GM10248 (cell line): ENCODE measurements at regions of chr7 and their contacts with region 1.

Region 1: DNA sequence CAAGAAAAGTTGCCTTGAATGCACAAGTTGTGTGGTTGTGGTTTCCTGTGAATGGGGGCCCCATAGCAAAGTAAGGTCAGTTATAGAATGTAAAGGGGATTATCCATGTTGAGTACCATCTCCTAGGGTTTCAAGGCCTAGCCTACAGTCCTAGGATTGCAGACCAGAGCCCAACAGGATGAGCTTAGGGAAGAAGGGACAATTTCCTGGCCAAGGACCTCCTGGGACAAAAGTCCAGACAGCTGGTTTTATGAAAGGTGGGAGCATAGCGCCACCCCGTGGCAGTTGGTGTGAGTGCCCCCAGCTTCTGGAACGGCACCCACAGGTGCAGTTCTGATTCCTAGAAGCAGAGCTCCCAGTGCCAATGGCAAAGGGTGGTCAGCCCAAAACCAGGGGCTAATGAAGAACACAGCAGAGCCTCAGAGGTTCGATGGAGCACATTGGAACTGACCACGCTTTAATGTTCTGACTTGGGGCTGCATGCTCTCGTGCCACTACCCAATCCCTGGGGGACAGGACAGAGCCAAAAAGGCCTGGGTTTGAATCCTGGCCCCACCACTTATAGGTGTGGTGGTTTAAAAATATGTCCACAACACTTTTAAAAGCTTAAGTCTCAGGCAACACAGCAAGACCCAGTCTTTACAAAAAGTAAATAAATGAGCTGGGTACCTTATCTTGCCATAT is 25.8 kb upstream of the TMEM120A start:
- DNase-seq: peak; percentile 79
- CTCF ChIP-seq: peak; percentile 82

Region 2: GRCh38 chr7:75762314-75762917 is 257.8 kb before region 1 on chr7:
- CTCF ChIA-PET with region 1: interaction called, 18 read pairs
- POLR2A ChIA-PET with region 1: no interaction called
- DNase-seq: peak; percentile 80
- CTCF ChIP-seq: peak; percentile 72

Region 3: DNA sequence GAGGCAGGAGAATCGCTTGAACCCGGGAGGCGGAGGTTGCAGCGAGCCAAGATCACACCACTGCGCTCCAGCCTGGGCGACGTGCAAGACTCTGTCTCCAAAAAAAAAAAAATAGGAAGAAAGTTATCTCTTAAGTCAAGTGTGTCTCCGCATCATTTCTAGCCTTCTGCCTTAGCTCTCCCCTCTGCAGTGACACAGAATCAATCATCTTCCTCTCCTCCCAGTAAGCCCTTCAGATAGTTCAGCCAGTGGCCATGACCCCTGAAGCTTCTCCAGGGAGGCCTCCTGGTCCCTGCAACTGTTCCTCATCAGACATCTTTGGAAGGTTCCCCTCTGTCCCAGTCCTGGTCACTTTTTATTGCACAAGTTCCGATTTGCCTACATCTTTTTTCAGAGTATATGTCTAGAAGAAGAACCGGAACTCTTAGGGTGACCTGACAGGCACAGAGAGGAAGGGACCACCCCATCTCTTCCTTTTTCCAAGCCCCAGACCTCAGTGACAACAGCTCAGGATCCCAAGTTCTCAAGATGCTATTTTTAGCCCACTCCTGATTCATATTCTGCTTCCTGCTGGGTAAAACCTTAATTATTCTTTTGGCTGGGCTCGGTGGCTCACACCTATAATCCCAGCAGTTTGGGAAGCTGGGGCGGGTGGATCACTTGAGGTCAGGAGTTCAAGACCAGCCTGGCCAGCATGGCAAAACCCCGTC is 147.9 kb before region 1 on chr7:
- CTCF ChIA-PET with region 1: interaction called, 193 read pairs
- POLR2A ChIA-PET with region 1: no interaction called
- DNase-seq: no peak
- CTCF ChIP-seq: no peak

Region 4: GRCh38 chr7:75928331-75928909 is 91.8 kb before region 1 on chr7:
- CTCF ChIA-PET with region 1: interaction called, 10 read pairs
- POLR2A ChIA-PET with region 1: no interaction called
- DNase-seq: peak; percentile 64
- CTCF ChIP-seq: no peak

Region 5: DNA sequence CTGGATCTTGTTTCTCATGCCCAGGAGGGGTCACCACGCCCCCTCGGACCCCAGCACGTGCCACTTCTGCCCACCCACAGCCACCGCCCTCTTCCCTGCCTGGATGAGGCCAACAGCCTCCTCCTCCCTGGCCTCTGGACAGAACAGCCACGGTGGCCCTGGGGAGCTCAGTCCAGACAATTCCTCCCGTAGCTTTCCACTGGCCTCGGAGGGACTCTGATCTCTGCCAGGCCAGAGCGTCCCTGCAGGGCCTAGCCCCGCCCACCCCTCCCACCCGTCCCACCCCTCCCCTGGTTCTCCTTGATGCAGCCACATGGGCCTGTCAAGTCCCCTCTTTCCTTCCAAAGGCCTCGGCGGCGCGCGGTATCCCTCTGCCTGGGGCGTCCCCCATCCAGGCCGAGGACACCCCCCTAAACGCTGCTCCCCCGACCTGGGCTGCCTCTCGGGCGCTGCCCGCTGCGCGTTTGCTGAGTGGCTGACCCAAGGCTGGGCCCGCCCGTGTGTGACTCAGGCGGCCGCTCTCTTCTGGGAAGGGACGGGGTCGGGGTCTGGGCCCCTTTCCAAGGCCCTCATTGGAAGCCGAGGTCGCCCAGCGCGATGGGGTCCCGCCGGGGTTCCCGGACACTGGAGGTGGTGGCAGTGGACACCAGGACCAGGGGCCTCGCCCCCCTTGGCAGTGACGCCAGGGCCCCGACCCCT is 26.3 kb before region 1 on chr7:
- CTCF ChIA-PET with region 1: interaction called, 11 read pairs
- POLR2A ChIA-PET with region 1: no interaction called
- DNase-seq: peak; percentile 67
- CTCF ChIP-seq: no peak

Region 6: GRCh38 chr7:76037310-76037709 is 17.1 kb after region 1 on chr7:
- CTCF ChIA-PET with region 1: interaction called, 48 read pairs
- POLR2A ChIA-PET with region 1: interaction called, 3 read pairs
- DNase-seq: no peak
- CTCF ChIP-seq: no peak

Region 7: GRCh38 chr7:76411626-76412025 is 391.5 kb after region 1 on chr7:
- CTCF ChIA-PET with region 1: no interaction called
- POLR2A ChIA-PET with region 1: no interaction called
- DNase-seq: no peak
- CTCF ChIP-seq: no peak